GM12878 (cell line): ENCODE measurements at regions of chr12 and their contacts with region 1.

Region 1: DNA sequence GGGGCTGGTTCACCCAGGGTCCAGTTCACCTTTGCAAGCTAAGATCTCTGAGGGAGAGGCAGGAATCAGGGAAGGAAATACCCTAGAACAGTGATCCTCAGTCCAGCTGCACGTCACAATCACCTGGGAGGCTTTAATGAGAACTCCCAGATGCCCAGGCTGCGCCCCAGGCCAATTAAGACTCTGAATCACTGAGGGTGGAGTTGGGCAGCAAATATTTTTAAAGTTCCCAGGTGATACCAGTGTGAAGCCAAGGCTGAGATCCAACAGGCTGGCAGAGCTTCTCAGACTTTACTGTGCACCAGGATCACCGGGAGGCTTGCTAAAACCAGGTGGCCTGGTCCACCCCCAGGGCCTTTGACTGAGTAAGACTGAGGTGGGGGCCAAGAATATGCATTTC is 23.8 kb downstream of the MYL2 start:
- DNase-seq: no peak
- ATAC-seq: no peak
- H3K4me3 ChIP-seq: no peak overlapping the region
- H3K27ac ChIP-seq: no peak overlapping the region
- H3K4me1 ChIP-seq: no peaks in the 10 kb centered on the region
- H3K27me3 ChIP-seq: no peaks in the 10 kb centered on the region; a peak in 1 of 4 replicates
- CTCF ChIP-seq: no peak
- EP300 ChIP-seq: no peak
- POLR2A ChIP-seq: no peak
- RAD21 ChIP-seq: no peak

Region 2: GRCh38 chr12:110883251-110883650 is 13.3 kb before region 1 on chr12:
- CTCF ChIA-PET with region 1: interaction called, 26 read pairs
- POLR2A ChIA-PET with region 1: no interaction called
- RAD21 ChIA-PET with region 1: interaction called, 3 read pairs
- SMC1A ChIA-PET with region 1: interaction called, 11 read pairs
- in situ Hi-C with region 1: no loop called
- intact Hi-C with region 1: no loop called
- DNase-seq: no peak
- ATAC-seq: no peak
- H3K4me3 ChIP-seq: no peak overlapping the region
- H3K27ac ChIP-seq: no peak overlapping the region
- H3K4me1 ChIP-seq: no peaks in the 10 kb centered on the region
- H3K27me3 ChIP-seq: no peaks in the 10 kb centered on the region
- CTCF ChIP-seq: no peak
- EP300 ChIP-seq: no peak
- POLR2A ChIP-seq: no peak
- RAD21 ChIP-seq: no peak

Region 3: GRCh38 chr12:110921262-110921661 is 24.7 kb after region 1 on chr12:
- CTCF ChIA-PET with region 1: interaction called, 10 read pairs
- POLR2A ChIA-PET with region 1: interaction called, 4 read pairs
- RAD21 ChIA-PET with region 1: interaction called, 3 read pairs
- SMC1A ChIA-PET with region 1: interaction called, 8 read pairs
- in situ Hi-C with region 1: no loop called
- intact Hi-C with region 1: no loop called
- DNase-seq: no peak
- ATAC-seq: no peak
- H3K4me3 ChIP-seq: no peak overlapping the region
- H3K27ac ChIP-seq: no peak overlapping the region
- H3K4me1 ChIP-seq: peaks cover 3% of the 10 kb centered on the region
- H3K27me3 ChIP-seq: no peaks in the 10 kb centered on the region; a peak in 1 of 4 replicates
- CTCF ChIP-seq: no peak
- EP300 ChIP-seq: no peak
- POLR2A ChIP-seq: no peak
- RAD21 ChIP-seq: no peak

Region 4: DNA sequence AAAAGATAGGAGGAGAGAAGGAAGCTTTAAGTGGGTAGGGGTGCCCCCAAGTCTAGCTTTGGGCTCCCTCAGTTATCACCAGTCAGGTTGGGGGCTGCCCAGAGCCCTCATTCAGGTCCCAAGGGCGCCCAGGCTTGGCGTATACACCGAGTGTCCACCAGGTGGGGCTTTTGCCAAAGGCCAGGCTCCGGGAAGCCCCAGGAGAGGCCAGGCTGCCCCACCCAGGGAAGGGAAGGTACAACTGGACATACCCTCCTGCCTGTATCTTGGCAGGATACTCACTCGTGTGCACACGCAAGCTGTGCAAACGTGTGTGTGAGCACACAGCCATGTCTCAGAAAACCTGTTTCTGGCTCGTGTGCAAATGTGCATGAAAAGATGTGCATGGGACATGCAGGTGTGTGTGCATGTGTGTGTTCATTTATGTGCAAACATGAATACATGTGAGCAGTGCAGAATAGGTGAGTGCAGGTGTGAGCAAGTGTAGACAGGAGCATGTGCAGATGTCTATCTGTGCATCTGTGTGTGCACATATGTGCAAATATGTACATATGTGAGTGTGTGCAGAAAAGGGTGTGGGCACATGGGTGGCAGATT is 127.7 kb after region 1 on chr12:
- CTCF ChIA-PET with region 1: interaction called, 9 read pairs
- POLR2A ChIA-PET with region 1: interaction called, 3 read pairs
- RAD21 ChIA-PET with region 1: interaction called, 5 read pairs
- SMC1A ChIA-PET with region 1: interaction called, 8 read pairs
- in situ Hi-C with region 1: no loop called
- intact Hi-C with region 1: loop called (anchors 2 kb)
- DNase-seq: peak; percentile 4
- ATAC-seq: peak; percentile 97
- H3K4me3 ChIP-seq: no peak overlapping the region
- H3K27ac ChIP-seq: no peak overlapping the region
- H3K4me1 ChIP-seq: no peaks in the 10 kb centered on the region
- H3K27me3 ChIP-seq: peaks cover 0 to 1% of the 10 kb centered on the region in 2 experiments; a peak in 1 of 4 replicates
- CTCF ChIP-seq: peak; percentile 80 to 86 (median 80)
- EP300 ChIP-seq: no peak
- POLR2A ChIP-seq: no peak
- RAD21 ChIP-seq: peak; percentile 93

Region 5: GRCh38 chr12:111313833-111314259 is 417.3 kb after region 1 on chr12:
- CTCF ChIA-PET with region 1: interaction called, 14 read pairs
- POLR2A ChIA-PET with region 1: no interaction called
- RAD21 ChIA-PET with region 1: interaction called, 9 read pairs
- SMC1A ChIA-PET with region 1: interaction called, 4 read pairs
- in situ Hi-C with region 1: loop called (anchors 5 kb)
- intact Hi-C with region 1: loop called (anchors 1 kb)
- DNase-seq: no peak
- ATAC-seq: peak; percentile 85
- H3K4me3 ChIP-seq: no peak overlapping the region
- H3K27ac ChIP-seq: no peak overlapping the region
- H3K4me1 ChIP-seq: no peaks in the 10 kb centered on the region
- H3K27me3 ChIP-seq: no peaks in the 10 kb centered on the region
- CTCF ChIP-seq: peak; percentile 86 to 92 (median 90)
- EP300 ChIP-seq: no peak
- POLR2A ChIP-seq: no peak
- RAD21 ChIP-seq: peak; percentile 78